ENCODE measurements at regions of chr10 and their contacts with region 1.

Region 1: DNA sequence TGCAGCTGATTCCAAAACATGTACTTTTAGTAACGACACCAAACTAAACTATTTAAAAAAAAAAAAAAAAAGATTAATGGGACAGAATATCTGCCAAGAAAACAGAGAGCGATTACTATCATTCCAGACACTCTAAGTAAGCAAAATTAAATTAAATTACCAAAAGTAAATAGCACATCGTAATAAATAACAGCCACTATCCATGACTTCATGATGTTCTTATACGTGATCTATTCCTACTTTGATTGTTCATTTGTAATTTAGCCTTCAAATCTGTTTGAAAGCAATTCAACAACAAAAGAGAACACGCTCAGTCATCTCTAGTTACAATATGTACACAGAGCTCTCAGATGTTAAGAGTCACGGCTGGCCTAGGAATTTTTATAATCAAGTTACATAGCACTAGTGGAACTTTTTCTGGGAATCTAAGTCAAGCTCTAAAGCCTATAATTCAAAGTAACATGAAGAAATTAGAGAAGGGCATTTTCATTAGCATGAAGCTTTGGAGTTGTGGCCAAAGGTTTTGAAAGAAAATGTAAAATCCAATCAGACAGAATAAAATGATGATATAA is 241.7 kb upstream of the NEBL start:
- H3K4me3 ChIP-seq: no peak overlapping the region
- H3K27ac ChIP-seq: no peak overlapping the region
- H3K4me1 ChIP-seq: no peaks in the 10 kb centered on the region
- CTCF ChIP-seq: no peak

Region 2: GRCh38 chr10:19738440-19738839 is 1400.4 kb before region 1 on chr10:
- CTCF ChIA-PET with region 1: no interaction called
- POLR2A ChIA-PET with region 1: interaction called, 10 read pairs
- H3K4me3 ChIP-seq: no peak overlapping the region
- H3K27ac ChIP-seq: no peak overlapping the region
- H3K4me1 ChIP-seq: no peaks in the 10 kb centered on the region
- CTCF ChIP-seq: no peak